ENCODE measurements at regions of chr2 and their contacts with region 1.

Region 1: DNA sequence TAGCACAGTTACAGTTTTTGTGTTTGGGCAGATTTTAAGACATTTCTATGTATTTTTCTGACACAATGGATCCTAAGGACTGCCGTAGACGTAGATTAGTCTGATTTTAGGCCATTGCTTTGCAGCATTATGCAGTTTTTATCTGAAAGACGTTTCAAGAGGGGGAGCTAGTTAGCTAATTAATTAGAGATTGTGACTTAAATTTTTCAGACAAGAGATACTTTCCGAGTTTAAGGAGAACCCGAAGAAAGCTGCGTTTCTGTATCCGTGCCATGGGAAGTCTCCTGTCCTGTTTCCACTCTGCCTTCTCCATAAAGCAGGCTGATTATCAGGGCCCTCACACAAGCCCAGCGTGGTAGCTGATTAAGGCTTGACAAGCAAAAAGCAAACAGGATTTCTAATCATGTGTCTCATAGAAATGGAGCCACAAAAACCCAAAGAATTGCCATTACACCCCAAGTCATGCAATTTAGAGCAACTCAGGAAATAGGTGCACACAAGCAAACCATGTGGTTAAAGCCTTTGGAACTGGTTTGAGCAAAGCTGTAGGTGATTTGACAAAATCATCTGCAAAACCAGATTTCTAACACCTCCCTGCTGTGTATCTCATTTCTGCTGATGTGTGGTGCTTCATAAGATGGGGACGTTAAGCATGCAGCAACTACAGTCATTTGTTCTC is 808.1 kb downstream of the RNF144A start:
- DNase-seq: peak; percentile 51
- H3K4me3 Mint-ChIP-seq: peak overlapping the region; percentile 89
- H3K27ac Mint-ChIP-seq: peak overlapping the region; percentile 90
- H3K4me1 Mint-ChIP-seq: peaks cover 58% of the 10 kb centered on the region
- H3K27me3 Mint-ChIP-seq: no peaks in the 10 kb centered on the region

Region 2: GRCh38 chr2:7427293-7428060 is 297.8 kb before region 1 on chr2:
- intact Hi-C with region 1: loop called (anchors 2 kb)
- DNase-seq: no peak
- H3K4me3 Mint-ChIP-seq: peak overlapping the region; percentile 49
- H3K27ac Mint-ChIP-seq: peak overlapping the region; percentile 78
- H3K4me1 Mint-ChIP-seq: peaks cover 45% of the 10 kb centered on the region
- H3K27me3 Mint-ChIP-seq: no peaks in the 10 kb centered on the region

Region 3: DNA sequence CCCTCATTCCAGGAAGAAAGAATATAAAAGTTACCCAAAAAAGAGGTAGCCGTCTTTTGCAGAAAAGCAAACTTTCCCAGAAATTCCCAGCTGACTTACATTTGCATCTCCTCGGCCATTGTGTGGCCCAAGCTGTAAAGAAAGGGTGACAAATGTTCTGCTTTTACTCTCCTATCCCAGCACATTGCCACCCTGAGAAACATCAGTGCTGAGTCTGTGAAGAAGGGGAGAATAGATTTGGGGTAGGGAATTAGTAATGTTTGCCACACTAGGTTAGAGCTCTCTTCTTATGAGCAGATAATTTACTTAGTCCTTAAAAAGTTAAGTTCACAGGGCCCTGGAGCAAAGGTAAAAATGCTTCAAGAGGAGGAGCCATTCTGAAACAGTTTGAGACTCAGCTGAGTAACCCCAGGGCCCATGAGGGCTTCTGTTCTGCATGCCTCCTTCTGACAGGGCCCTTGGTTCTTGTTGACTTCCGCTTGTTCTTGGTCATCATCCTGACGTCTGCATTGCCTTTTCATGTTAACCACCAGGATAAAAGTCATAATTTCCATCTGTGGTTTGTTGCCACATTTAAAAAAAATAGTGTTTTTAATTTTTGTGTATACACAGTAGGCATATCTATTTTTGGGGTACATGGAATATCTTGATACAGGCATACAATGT is 257.4 kb before region 1 on chr2:
- intact Hi-C with region 1: loop called (anchors 1 kb)
- DNase-seq: peak; percentile 57
- H3K4me3 Mint-ChIP-seq: peak overlapping the region; percentile 15
- H3K27ac Mint-ChIP-seq: peak overlapping the region; percentile 96
- H3K4me1 Mint-ChIP-seq: peaks cover 58% of the 10 kb centered on the region
- H3K27me3 Mint-ChIP-seq: no peaks in the 10 kb centered on the region

Region 4: DNA sequence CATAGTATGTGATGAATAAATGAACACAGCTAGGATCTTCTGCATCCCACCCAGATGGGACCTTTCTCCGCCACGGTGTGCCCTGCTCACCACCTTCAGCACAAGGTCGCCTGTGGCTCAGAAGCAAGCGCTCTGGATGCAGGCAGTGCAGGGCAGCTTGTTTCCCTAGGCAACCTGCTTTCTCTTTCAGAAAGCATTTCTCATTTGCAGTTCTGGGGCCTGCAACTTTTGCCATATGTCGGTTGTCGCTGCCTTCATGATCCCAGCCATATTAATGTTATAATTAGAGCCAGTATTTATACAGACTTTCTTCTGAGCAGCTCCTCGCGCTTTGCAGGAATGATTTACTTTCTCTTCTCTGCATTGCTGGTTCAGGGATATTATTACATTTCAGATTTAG is 115.3 kb before region 1 on chr2:
- intact Hi-C with region 1: loop called (anchors 5 kb)
- DNase-seq: no peak
- H3K4me3 Mint-ChIP-seq: no peak overlapping the region
- H3K27ac Mint-ChIP-seq: peak overlapping the region; percentile 37
- H3K4me1 Mint-ChIP-seq: peaks cover 47% of the 10 kb centered on the region
- H3K27me3 Mint-ChIP-seq: no peaks in the 10 kb centered on the region

Region 5: GRCh38 chr2:7692657-7693161 is 32.6 kb before region 1 on chr2:
- intact Hi-C with region 1: loop called (anchors 5 kb)
- DNase-seq: no peak
- H3K4me3 Mint-ChIP-seq: peak overlapping the region; percentile 3
- H3K27ac Mint-ChIP-seq: peak overlapping the region; percentile 85
- H3K4me1 Mint-ChIP-seq: peaks cover 40% of the 10 kb centered on the region
- H3K27me3 Mint-ChIP-seq: no peaks in the 10 kb centered on the region

Measured in activated T-helper 2 cell treated with anti-CD3 and anti-CD28 coated beads, Interferon-gamma antibody, Interleukin-2, Interleukin-4, amounts not matched to agents 10 μg/mL and 5 μg/mL and 100 μg/mL, durations not matched to agents 14 hours and 24 hours and 36 hours (primary cell).